ENCODE measurements at regions of chr20 and their contacts with region 1.

Region 1: DNA sequence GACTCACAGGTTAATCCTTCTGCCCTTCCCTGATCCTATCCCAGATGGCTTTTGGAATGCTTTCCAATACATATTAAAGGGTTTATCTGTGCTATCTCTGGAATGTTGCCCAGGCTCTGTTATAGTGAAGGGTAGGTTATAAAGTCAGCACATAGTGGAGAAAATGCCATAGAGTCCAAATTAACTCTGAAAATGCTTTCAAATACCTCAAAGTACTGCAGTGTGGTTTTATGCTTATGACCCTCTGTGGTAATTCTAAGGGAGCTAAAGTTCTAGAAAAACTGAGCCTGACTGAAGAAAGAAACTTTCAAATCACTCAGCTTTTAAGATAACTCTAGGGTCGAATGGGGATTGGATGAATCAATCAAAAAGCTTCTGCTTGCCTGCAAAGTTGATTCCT is 159.8 kb downstream of the PLCB1 start:
- DNase-seq: peak; percentile 77
- H3K4me3 ChIP-seq: no peak overlapping the region
- CTCF ChIP-seq: no peak

Region 2: GRCh38 chr20:8305449-8305978 is 13.6 kb after region 1 on chr20:
- CTCF ChIA-PET with region 1: interaction called, 16 read pairs
- POLR2A ChIA-PET with region 1: no interaction called
- DNase-seq: no peak
- H3K4me3 ChIP-seq: no peak overlapping the region
- CTCF ChIP-seq: peak; percentile 45

Measured in AG04449 (cell line).